ENCODE measurements at regions of chr2 and their contacts with region 1.

Region 1: DNA sequence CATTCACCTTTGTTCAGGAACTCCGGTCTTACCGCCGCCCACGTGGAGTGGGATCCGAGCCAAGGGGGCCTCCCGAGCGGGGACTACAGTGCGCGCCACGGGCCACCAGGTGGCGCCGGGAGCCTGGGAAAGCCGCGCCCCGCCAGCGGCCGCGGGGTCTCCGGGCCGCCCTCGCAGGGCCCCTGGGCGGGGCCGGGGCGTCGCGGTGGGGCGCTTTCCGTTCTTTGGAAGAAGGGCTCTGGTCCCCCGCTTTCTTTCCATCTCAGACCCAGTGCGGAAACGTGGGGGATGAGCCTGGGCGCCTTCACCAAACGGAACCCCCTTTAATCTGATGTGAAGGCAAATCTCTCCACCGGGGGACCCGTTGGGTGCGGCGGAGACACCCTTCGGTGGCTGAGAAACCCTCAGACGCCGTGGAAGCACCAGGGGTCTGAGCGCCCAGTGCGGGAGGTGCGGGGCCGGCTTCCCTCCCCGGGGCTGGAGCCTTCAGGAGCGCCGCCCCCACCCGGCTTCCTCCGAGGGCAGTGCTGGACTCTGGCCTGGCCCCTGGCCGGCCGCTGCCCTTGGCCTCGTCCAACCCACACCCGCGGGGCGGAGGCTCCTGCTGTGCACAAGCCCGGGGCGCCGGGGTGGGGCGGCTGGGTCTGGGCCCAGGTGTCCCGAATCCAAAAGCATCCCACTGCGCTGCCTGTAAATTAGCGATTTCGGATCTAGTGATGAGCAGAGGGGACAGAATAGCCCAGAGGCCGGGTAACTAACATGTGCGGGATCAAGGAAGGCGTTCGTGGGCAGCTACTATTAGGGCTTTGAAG is 44.6 kb downstream of the GORASP2 start:
- DNase-seq: peak; percentile 74 to 89
- H3K4me3 ChIP-seq: peak overlapping the region; percentile 64 to 84
- H3K27ac ChIP-seq: peak overlapping the region; percentile 75 to 77
- H3K4me1 ChIP-seq: peaks cover 0 to 15% (median 7%) of the 10 kb centered on the region in 4 donors
- H3K27me3 ChIP-seq: no peaks in the 10 kb centered on the region
- CTCF ChIP-seq: peak; percentile 87 to 96

Region 2: GRCh38 chr2:170929686-170930050 is 44.0 kb before region 1 on chr2:
- intact Hi-C with region 1: loop called (anchors 5 kb)
- DNase-seq: peak in 1 of 2 donors; percentile 38
- H3K4me3 ChIP-seq: peak overlapping the region; percentile 92 to 99
- H3K27ac ChIP-seq: peak overlapping the region; percentile 98 to 99
- H3K4me1 ChIP-seq: peaks cover 0 to 45% (median 21%) of the 10 kb centered on the region in 4 donors
- H3K27me3 ChIP-seq: no peaks in the 10 kb centered on the region
- CTCF ChIP-seq: no peak

Region 3: DNA sequence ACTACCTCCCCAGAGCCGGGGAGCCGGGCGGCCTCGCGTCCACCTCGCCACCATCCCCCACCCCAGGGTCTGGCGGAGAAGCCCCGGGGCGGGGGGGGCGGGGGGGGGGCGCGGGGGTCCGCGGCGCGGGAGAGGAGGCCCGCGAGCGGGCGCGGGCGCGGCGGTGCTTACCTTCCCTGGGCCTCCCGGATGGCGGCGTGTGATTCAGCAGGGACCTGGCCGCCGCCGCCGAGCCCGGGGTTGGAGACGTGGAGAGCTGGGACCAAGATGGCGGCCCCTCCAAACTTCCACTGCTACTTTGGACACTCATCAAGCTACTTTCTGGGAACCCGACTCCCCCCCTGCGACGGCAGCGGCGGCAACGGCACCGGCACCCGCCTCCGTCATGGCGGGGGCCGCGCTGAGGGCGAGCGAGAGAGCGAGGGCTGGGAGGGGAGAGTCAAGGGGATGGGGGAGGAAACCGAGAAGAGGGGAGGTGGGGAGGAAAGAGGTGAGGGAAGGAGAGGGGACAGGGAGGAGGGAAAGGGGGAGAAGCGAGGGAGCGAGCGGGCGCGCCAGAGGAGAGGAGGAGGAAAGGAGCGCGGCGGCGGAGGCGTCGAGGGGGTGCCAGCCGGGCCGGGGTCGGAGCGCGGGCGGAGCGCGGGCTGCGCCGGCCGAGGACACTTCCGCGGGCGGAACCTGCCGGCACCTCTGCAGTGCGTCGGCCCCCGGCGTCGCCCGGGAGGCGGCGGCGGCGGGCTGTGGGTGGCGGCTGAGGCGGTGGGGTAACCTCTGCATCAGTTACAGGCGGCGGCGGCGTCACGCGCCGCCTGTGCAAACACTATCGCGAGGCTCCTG is 186.6 kb after region 1 on chr2 and contains the start of gene TLK1:
- intact Hi-C with region 1: loop called (anchors 1 kb)
- DNase-seq: peak; percentile 59 to 83
- H3K4me3 ChIP-seq: peak within 1 kb of the TSS; percentile 96 to 98
- H3K27ac ChIP-seq: peak within 1 kb of the TSS; percentile 98 to 100
- H3K4me1 ChIP-seq: peaks cover 0 to 21% (median 9%) of the 10 kb centered on the region in 4 donors
- H3K27me3 ChIP-seq: no peaks in the 10 kb centered on the region
- CTCF ChIP-seq: no peak

Region 4: DNA sequence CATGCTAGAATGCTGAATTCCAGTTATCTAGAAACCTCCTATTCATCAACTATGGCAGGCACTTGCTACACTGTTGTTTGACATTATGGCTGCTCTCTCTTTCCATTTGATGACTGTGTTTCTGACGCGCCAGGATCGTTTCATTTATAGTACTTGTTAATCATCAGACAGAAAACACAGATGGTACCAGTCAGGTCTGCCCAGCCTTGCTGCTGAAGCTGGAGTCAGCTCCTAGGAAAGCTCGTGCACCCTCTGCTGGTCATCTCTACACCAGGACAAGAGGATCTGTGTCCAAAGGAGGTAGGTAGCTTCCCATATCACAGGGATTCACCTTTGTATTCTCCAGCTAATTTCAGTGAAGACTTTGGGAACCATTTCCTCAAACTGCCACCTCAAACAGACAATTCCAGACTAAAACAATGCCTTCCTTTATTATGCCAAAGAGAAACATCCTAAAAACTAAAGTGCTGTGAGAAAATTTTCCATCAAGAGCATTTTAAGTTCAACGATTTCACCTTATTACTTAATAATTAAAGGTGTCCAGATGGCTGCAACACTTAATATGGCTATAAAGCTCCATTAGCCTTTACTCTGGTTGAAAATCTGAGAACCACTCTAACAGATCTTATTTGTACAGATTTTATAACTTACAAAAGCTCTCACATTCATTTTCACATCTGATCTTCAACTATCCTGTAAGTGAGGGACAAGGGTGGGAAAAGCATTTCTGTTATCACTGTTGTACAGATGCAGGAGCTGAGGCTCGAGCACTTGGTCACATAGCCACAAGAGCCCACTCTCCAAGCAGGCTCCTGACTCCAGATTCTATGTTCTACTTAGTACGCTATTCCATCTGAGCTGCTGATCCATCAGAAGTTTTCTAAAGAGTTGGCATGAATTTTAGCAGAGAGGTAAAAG is 442.6 kb after region 1 on chr2:
- intact Hi-C with region 1: loop called (anchors 2 kb)
- DNase-seq: peak; percentile 88
- H3K4me3 ChIP-seq: no peak overlapping the region
- H3K27ac ChIP-seq: no peak overlapping the region
- H3K4me1 ChIP-seq: peaks cover 0 to 11% (median 0%) of the 10 kb centered on the region in 4 donors
- H3K27me3 ChIP-seq: no peaks in the 10 kb centered on the region
- CTCF ChIP-seq: peak; percentile 75

Region 5: DNA sequence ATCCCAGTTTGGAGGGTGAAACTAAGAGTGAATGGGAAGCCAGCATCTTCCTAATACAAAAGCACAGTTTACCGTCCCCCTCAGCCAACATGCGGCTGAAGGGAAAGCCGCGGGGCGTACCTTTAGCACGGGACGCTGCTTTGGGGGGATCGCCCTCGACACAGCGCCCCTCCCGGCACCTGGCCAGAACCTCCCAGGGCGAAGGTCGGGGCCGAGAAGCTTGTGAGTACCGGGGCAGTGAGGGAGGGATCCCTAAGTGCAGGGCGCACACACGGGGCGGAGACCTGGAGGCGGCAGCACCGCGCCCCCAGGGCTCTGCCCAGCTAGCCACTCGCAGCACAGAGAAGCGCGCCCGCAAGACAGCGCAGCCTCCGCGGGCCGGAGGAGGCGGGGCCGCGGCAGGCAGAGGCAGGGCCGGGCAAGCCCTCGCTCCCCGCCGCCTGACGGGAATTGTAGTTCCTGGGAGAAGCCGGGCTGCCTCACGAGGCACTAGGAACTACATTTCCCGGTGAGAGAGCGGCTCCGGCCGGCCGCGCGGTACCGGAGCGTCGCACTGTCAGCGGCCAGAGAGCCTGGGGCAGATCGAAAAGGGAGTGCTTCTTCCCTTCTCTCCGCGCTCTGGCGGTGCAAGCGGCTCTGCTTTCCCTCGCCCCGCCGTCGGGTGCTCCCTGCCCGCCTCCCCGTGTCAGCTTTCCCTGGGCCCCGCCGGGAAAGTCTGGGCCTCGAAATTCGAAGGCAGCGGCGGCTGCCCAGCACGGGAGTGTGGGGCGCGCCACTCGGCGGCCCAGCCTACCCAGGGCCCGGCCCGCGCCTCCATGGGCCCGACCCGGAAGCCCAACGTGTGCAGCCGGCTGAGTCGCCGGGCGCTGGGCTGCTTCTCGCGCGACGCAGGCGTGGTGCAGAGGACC is 460.3 kb after region 1 on chr2 and contains the starts of genes DCAF17 and METTL8:
- intact Hi-C with region 1: loop called (anchors 5 kb)
- DNase-seq: peak; percentile 95 to 97
- H3K4me3 ChIP-seq: peak within 1 kb of the TSS; percentile 75 to 93
- H3K27ac ChIP-seq: peak within 1 kb of the TSS; percentile 94 to 95
- H3K4me1 ChIP-seq: peaks cover 0 to 12% (median 6%) of the 10 kb centered on the region in 4 donors
- H3K27me3 ChIP-seq: no peaks in the 10 kb centered on the region
- CTCF ChIP-seq: peak in 1 of 2 experiments; percentile 20